ENCODE measurements at regions of chr15 and their contacts with region 1.

Region 1: DNA sequence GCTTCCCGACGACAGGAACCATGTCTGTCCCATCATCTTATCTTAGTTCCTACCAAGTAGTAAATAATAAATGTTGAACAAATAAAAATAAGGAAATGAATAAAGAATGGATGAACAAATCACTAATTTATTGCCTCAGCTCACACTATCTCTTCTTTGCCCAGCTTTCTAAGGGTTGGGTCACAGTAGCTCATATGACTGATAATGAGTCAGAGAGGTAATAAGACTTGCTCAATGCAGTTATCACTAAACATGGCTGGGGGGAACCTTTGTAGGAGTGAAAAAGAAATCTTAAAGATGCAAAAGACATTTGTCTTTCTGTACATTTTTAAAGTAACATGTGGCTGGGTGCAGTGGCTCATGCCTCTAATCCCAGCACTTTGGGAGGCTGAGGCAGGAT is 182.3 kb downstream of the WDR76 start:
- DNase-seq: no peak
- ATAC-seq: peak in 1 of 2 donors; percentile 95

Region 2: GRCh38 chr15:43948691-43949325 is 60.2 kb before region 1 on chr15:
- intact Hi-C with region 1: loop called in 1 of 2 experiments (anchors 10 kb)
- DNase-seq: no peak
- ATAC-seq: no peak

Region 3: GRCh38 chr15:43991206-43991605 is 17.9 kb before region 1 on chr15:
- intact Hi-C with region 1: no loop called
- DNase-seq: no peak
- ATAC-seq: no peak

Measured in left cardiac atrium (tissue), 4 donors.